Testis (tissue), 5 donors: ENCODE measurements at regions of chr1 and their contacts with region 1.

Region 1: DNA sequence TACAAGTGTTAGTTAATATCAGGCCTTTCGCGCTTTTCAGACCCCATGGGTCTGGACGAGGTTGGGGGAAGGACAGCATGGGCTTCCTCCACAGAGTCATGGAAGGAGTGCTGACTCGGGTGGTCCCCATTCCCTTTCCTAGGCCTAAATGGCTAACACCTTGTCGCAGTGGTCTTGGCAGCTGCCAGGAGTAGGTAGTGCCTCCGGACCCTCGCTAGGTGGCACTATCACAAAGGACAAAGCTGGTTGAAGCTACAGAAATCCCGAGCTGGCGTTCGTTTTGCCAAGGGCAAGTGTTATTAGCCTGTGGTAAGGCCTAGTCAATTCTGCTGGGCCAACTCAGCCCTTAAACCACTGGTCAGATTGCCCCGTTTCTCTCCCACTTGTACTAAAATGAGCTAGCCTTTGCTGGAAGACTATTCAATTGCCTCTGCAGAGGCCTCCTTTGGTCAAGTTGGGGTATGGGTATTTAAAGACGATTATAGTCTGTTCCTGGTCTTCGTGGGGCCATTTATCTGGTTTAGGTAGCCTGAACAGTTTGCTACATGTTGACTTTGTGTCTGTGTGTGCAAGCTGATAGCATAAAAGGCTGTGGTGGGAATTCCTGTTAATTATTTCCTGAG is 1.1 kb upstream of the UBE2Q1 start:
- DNase-seq: peak; percentile 94
- H3K4me3 ChIP-seq: peak overlapping the region; percentile 74 to 83
- H3K27ac ChIP-seq: peak overlapping the region; percentile 87
- H3K4me1 ChIP-seq: peaks cover 17% of the 10 kb centered on the region
- H3K27me3 ChIP-seq: no peaks in the 10 kb centered on the region
- CTCF ChIP-seq: peak; percentile 86 to 95 (median 87)
- POLR2A ChIP-seq: no peak

Region 2: GRCh38 chr1:154520333-154520732 is 39.2 kb before region 1 on chr1:
- intact Hi-C with region 1: no loop called
- DNase-seq: peak; percentile 28
- H3K4me3 ChIP-seq: no peak overlapping the region
- H3K27ac ChIP-seq: peak overlapping the region in 1 of 2 donors; percentile 26
- H3K4me1 ChIP-seq: peaks cover 20% of the 10 kb centered on the region
- H3K27me3 ChIP-seq: no peaks in the 10 kb centered on the region
- CTCF ChIP-seq: no peak
- POLR2A ChIP-seq: no peak

Region 3: DNA sequence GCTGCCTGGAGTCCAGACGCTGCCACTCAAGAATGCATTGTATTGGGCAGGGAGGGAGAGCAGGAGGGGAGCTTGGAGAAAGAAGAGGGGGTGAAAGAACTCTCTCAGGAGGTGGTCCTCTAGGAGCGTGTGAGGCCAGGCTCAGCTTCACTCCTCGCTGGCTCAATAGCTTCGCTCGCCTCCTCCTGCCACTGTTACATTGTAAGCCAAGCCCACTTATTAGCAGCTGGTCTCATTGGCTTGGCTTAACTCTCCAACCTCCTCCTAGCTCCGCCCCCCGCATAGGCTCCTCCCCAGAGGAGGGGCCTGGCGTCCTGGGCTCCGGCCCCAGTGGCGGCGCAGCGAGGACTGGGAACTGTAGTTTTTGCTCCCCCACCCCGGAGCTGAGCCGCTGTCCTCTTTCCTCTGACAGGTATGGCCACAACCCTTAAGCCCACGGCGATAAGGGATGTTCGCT is 310.6 kb after region 1 on chr1 and contains the start of gene KCNN3:
- intact Hi-C with region 1: loop called (anchors 10 kb)
- DNase-seq: peak; percentile 89
- H3K4me3 ChIP-seq: peak within 1 kb of the TSS; percentile 5 to 20
- H3K27ac ChIP-seq: no peak within 1 kb of the TSS
- H3K4me1 ChIP-seq: peaks cover 11% of the 10 kb centered on the region
- H3K27me3 ChIP-seq: no peaks in the 10 kb centered on the region
- CTCF ChIP-seq: no peak
- POLR2A ChIP-seq: no peak
- total RNA-seq, gene KCNN3: 0.24 to 0.56 TPM